Psoas muscle (tissue), 8 donors: ENCODE measurements at regions of chr20 and their contacts with region 1.

Region 1: GRCh38 chr20:38221119-38221589 is 39.4 kb downstream of the KIAA1755 start:
- DNase-seq: peak; percentile 69 to 82
- ATAC-seq: peak; percentile 69 to 87 (median 76)
- H3K4me3 ChIP-seq: no peak overlapping the region
- H3K27ac ChIP-seq: no peak overlapping the region
- H3K4me1 ChIP-seq: no peaks in the 10 kb centered on the region
- H3K27me3 ChIP-seq: no peaks in the 10 kb centered on the region
- CTCF ChIP-seq: peak; percentile 80

Region 2: DNA sequence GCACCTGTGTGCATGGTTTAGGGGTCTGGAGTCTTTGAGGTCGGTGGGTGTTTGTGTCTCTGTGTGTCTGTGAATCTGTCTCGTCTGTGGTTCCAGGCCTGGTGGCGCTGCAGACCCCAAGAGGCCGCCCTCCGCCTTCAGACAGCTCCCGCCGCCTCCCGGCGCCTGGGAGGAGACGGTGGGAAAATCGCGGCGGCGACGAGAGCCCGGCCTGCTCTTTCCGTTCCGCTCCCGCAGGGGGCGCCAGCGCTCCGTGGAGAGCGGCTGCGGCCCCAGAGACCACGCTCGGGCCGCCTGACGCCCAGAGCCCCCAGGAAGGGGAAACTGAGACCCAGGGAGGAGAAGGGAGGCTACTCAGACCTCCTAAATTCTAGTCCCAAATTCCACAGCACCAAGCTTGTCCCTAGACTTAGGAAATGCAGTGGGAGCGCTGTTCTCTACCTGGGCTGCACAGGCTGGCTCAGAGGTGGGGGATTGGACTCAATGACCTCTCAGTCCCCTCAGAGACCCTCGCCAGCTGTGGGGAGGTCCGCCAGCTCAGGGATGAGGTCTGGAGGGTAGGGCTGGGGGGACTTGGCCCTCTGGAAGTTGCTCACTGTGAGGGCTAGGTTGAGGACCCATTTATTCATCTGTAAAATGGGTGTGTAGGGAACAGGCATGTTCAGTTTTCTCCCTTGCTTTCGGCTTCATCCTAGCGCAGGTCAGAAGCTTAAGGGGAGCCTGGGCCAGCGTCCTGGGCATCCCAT is 656.6 kb before region 1 on chr20:
- intact Hi-C with region 1: loop called (anchors 2 to 5 kb)
- DNase-seq: peak; percentile 37 to 66
- ATAC-seq: peak; percentile 72 to 91 (median 82)
- H3K4me3 ChIP-seq: no peak overlapping the region
- H3K27ac ChIP-seq: no peak overlapping the region
- H3K4me1 ChIP-seq: no peaks in the 10 kb centered on the region
- H3K27me3 ChIP-seq: peaks cover 0 to 44% (median 8%) of the 10 kb centered on the region in 3 donors
- CTCF ChIP-seq: peak; percentile 89

Region 3: DNA sequence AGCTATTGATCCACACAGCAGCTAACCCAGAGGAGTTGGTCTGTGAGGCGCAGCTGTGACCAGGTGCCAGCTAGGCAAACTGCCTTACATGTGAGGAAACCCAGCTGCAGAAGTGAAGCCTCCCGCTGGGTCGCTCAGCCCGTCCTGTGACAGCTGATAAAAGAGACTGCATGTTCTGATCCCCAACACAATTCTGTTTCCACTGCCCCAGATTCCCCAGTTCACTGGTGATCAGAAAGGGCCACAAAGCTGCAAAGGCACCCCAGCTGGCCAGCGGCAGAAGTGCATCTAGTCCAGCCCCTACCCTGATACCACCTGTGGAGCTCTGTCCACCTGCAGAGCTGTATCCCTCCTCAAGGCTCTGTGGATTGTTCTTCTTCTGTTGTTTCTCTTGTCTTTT is 462.8 kb before region 1 on chr20:
- intact Hi-C with region 1: loop called in 1 of 2 experiments (anchors 5 kb)
- DNase-seq: no peak
- ATAC-seq: peak in 1 of 4 donors; percentile 25
- H3K4me3 ChIP-seq: no peak overlapping the region
- H3K27ac ChIP-seq: no peak overlapping the region
- H3K4me1 ChIP-seq: peaks cover 11% of the 10 kb centered on the region
- H3K27me3 ChIP-seq: no peaks in the 10 kb centered on the region
- CTCF ChIP-seq: no peak

Region 4: DNA sequence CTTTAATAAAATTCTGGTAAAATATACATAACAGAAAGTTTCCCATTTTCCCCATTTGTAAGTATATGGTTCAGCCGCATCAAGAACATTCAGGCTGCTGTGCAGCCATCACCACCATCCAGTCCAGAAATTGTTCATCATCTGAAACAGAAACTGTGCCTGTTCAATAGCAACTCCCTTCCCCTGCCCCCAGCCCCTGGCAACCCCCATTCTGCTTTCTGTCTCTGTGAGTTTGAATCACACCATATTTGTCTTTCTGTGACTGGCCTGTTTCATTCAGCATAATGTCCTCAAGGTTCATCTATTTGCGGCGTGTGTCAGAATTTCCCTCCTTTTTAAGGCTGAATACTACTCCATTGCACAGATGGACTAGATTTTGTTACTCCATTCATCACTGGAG is 299.1 kb before region 1 on chr20:
- intact Hi-C with region 1: loop called in 1 of 2 experiments (anchors 10 kb)
- DNase-seq: no peak
- ATAC-seq: no peak
- H3K4me3 ChIP-seq: no peak overlapping the region
- H3K27ac ChIP-seq: no peak overlapping the region
- H3K4me1 ChIP-seq: no peaks in the 10 kb centered on the region
- H3K27me3 ChIP-seq: peaks cover 0 to 36% (median 5%) of the 10 kb centered on the region in 3 donors
- CTCF ChIP-seq: no peak

Region 5: DNA sequence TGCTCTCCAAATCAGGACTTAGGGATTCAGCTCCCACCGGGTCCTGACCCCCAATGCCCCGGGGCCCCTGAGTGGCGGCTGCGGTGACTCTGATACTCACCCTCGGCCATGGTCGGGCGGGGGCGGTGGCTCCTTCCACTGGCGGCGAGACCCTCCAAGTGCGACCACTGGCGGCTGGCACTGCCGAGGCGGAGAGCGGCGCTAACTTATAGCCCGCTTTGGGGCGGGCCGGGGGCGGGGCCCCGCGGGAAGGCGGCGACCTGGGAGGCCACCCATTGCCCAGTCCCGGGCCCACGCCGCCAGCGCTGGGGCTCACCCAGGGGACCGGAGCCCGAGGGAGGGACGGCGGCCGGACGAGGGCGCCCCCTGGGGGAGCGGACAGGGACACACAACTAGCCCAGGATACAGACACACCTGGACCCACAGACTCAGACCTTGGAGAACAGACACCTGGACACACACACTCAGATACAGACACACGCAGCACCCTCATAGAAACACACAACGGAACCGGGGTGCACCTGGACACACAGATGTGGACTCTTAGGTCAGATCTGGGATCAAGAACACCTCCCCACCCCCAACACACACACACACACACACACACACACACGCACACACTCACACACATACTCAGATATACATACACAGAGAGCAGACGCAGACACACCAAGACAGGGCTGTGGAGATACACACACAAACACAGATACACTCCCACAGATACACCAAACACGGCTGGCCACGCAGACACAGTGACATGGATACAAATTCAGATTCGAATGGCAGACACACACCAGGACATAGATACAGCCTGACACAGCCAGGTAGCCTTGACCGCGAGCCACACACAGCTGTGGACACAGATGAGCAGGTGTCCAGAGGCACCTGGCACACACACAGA is 55.8 kb before region 1 on chr20 and contains the start of gene TGM2:
- intact Hi-C with region 1: loop called (anchors 5 kb)
- DNase-seq: peak; percentile 82 to 90
- ATAC-seq: peak; percentile 86 to 97 (median 92)
- H3K4me3 ChIP-seq: peak within 1 kb of the TSS; percentile 77
- H3K27ac ChIP-seq: peak within 1 kb of the TSS; percentile 72
- H3K4me1 ChIP-seq: peaks cover 12% of the 10 kb centered on the region
- H3K27me3 ChIP-seq: no peaks in the 10 kb centered on the region
- CTCF ChIP-seq: peak; percentile 89
- total RNA-seq, gene TGM2: 38.0 to 235 (median 134) TPM